HCT116 (cell line): ENCODE measurements at regions of chr1 and their contacts with region 1.

Region 1: GRCh38 chr1:154391086-154391770 is 13.9 kb upstream of the IL6R start:
- DNase-seq: no peak
- ATAC-seq: no peak
- H3K4me3 ChIP-seq: no peak overlapping the region
- H3K27ac ChIP-seq: no peak overlapping the region
- H3K4me1 ChIP-seq: no peaks in the 10 kb centered on the region
- H3K27me3 ChIP-seq: no peaks in the 10 kb centered on the region
- CTCF ChIP-seq: no peak
- POLR2A ChIP-seq: no peak
- RAD21 ChIP-seq: no peak

Region 2: DNA sequence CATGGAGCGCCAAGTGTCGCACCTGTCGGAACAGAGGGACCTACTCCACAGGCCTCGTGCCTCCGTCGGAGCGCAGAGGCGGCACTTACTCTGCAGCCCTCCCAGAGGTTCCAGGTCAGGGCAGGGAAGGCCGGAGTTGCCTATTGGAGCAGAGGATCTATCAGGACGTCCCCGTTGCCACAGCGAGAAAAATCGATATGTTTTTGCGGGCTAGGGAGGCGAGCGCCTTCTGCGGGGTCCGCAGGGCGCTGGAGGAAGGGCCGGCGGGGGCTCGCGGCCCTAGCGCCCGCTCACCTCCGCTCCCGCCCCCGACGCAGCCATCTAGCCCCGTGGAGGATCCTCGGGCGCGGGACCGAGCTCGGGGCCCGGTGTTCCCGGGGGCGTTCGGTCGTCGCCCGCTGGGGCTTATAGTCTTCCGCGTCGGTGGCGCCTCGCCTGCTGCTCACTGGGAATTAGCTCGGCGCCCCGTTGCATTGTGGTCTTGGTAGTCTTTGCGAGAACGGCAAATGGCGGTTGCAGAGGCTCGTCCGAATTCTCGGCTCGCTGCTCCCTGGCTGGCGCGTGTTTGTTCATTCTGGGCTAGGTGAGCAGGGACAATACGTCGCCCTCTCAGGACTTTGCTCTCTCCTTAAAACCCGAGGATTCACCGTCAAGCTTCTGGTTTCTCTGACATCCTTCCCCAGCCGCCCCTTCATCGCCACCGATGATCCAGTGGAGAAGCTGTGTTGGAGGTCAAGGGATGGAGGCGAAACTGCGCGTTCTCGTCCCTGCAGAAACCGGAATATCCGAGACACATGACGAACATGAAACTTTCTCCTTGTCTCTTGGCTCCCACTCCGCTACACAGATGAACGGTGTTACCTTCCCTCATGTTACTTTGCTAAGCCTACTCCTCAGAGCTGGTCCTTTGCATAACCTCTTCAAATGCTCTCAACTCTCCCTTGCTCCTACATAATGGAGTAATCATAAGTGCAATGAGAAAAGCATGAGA is 413.7 kb before region 1 on chr1 and contains the start of gene JTB:
- CTCF ChIA-PET with region 1: no interaction called
- POLR2A ChIA-PET with region 1: no interaction called
- RAD21 ChIA-PET with region 1: no interaction called
- intact Hi-C with region 1: no loop called
- DNase-seq: no peak
- ATAC-seq: peak; percentile 91
- H3K4me3 ChIP-seq: peak within 1 kb of the TSS; percentile 81 to 100
- H3K27ac ChIP-seq: peak within 1 kb of the TSS; percentile 91
- H3K4me1 ChIP-seq: peaks cover 0 to 14% of the 10 kb centered on the region in 2 experiments; a peak in 2 of 4 replicates
- H3K27me3 ChIP-seq: no peaks in the 10 kb centered on the region
- CTCF ChIP-seq: no peak
- POLR2A ChIP-seq: peak; percentile 48
- RAD21 ChIP-seq: no peak
- total RNA-seq, gene JTB: 123 TPM

Region 3: GRCh38 chr1:154404984-154405761 is 13.9 kb after region 1 on chr1 and contains the start of gene IL6R:
- CTCF ChIA-PET with region 1: no interaction called
- POLR2A ChIA-PET with region 1: no interaction called
- RAD21 ChIA-PET with region 1: no interaction called
- intact Hi-C with region 1: loop called (anchors 1 kb)
- DNase-seq: peak; percentile 82
- ATAC-seq: peak; percentile 82
- H3K4me3 ChIP-seq: peak within 1 kb of the TSS; percentile 61 to 65
- H3K27ac ChIP-seq: peak within 1 kb of the TSS; percentile 69
- H3K4me1 ChIP-seq: peaks cover 30 to 36% of the 10 kb centered on the region in 2 experiments
- H3K27me3 ChIP-seq: no peaks in the 10 kb centered on the region; the same call in 1 of the 2 replicates
- CTCF ChIP-seq: peak; percentile 45 to 91 (median 55); a peak in 5 of 6 replicates
- POLR2A ChIP-seq: no peak
- RAD21 ChIP-seq: peak; percentile 91
- total RNA-seq, gene IL6R: 6.8 TPM